ENCODE measurements at regions of chr12 and their contacts with region 1.

Region 1: DNA sequence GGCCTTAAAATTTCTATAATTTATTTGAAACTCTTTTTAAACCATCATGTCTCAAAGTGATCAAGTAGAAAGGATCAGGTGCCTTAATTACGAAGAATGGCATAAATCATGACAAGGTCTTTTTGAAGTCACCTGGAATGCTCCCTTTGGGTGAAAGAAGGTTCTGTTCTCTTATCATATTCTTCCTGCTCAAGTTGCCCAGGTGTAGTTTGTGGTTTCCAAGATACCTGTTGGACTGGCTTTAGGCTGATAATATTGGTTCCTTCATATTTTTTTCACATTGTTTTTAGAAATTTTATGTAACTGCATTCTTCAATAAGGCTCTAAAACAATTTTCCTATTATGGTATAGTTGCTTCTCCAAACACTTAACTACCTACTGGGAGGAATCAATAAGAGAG is 29.2 kb downstream of the RASSF3 start:
- DNase-seq: no peak
- H3K4me3 ChIP-seq: no peak overlapping the region
- H3K27ac ChIP-seq: no peak overlapping the region
- H3K4me1 ChIP-seq: peaks cover 28% of the 10 kb centered on the region
- CTCF ChIP-seq: no peak

Region 2: GRCh38 chr12:64510667-64511066 is 128.8 kb before region 1 on chr12:
- CTCF ChIA-PET with region 1: no interaction called
- POLR2A ChIA-PET with region 1: no interaction called
- intact Hi-C with region 1: no loop called
- DNase-seq: no peak
- H3K4me3 ChIP-seq: no peak overlapping the region
- H3K27ac ChIP-seq: no peak overlapping the region
- H3K4me1 ChIP-seq: no peaks in the 10 kb centered on the region
- CTCF ChIP-seq: no peak

Region 3: GRCh38 chr12:64625243-64626077 is 14.0 kb before region 1 on chr12:
- CTCF ChIA-PET with region 1: interaction called, 8 read pairs
- POLR2A ChIA-PET with region 1: interaction called, 15 read pairs
- intact Hi-C with region 1: no loop called
- DNase-seq: peak; percentile 54
- H3K4me3 ChIP-seq: peak overlapping the region; percentile 64
- H3K27ac ChIP-seq: peak overlapping the region; percentile 60
- H3K4me1 ChIP-seq: peaks cover 49% of the 10 kb centered on the region
- CTCF ChIP-seq: no peak

Measured in OCI-LY7 (cell line).